ENCODE measurements at regions of chr19 and their contacts with region 1.

Region 1: GRCh38 chr19:34733826-34734600 is at the start of gene ZNF181:
- DNase-seq: peak; percentile 94
- H3K4me3 Mint-ChIP-seq: peak within 1 kb of the TSS; percentile 93
- H3K27ac Mint-ChIP-seq: peak within 1 kb of the TSS; percentile 96
- H3K4me1 Mint-ChIP-seq: peaks cover 23% of the 10 kb centered on the region
- H3K27me3 Mint-ChIP-seq: no peaks in the 10 kb centered on the region
- total RNA-seq, gene ZNF181: 3.9 and 4.4 TPM in 2 replicates

Region 2: DNA sequence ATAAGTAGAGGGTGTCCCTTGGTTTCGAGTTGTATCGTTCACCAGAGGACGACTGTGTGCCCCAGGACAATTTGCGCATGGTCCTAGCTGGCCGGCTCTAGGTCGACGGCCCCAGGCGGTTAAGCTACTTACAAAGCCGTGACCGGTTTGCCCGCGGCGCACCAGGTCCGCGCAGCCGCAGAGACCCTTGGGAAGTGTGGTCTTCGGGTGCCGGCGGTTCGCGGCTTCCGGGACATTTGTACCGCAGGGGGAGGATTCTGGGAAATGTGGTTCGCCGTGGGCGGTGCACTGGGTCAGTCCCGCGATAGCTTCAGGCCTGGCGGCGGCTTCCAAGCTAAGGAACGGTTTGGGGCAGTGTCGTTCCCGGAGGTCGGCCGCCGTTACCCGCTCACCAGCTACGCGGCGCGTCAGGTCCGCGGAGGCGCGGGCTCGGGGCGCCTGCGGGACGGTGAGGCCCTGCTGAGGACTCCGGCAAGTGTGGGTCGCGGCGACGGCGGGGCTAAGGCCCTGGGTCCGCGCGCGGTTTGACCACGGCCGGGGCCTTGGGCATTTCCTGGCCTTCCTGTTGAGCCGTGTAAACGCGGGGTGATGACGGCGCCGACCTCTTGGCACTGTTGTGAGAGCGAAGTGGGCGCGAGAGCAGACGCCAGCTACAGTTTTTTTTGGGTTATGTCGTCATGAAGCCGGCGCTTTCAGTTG is 56.5 kb before region 1 on chr19 and contains the start of gene ZNF302:
- intact Hi-C with region 1: loop called (anchors 1 kb)
- DNase-seq: peak; percentile 98
- H3K4me3 Mint-ChIP-seq: peak within 1 kb of the TSS; percentile 96
- H3K27ac Mint-ChIP-seq: peak within 1 kb of the TSS; percentile 100
- H3K4me1 Mint-ChIP-seq: peaks cover 28% of the 10 kb centered on the region
- H3K27me3 Mint-ChIP-seq: peaks cover 2% of the 10 kb centered on the region
- total RNA-seq, gene ZNF302: 14.4 and 15.2 TPM in 2 replicates

Region 3: DNA sequence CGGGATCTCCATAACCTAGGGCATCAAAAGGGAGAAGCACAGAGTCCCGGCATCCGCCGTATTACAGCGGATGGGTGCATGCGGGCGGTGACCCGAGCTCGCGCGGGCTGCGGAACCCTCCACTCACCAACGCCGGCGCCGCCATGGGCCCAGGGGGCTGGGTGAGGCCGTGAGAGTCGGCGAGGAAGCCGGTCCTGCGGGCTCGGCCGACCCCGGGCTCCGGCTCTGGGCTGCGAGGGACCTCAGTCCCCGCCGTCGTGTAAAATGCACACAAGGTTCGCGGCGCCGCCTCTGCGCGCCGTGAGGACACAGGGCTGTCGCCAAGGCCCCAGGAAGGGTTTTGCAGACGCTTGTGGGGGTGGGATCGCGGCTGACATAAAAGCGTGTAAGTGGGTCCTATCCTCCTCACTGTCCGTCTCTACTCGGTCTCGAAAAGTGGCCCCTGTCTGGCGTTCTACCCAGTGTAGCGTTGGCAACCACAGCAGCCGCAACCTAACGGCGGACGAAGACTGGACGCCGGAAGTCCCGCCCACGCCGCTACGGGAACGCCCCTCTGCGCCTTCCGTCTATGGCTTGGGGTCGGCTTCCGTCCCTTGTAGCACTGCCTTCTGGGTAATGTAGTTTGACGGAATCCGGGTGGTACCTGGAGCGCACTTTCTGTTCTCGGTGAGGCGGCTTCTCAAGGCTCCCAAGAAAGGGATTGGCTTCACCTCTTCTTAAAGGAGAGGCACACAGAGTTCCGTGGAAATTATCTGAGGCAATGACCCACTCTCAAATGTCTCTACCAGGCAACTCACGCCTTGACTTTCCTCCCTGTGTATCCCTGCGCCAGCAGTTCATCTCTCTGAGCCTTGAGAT is 38.9 kb after region 1 on chr19 and contains the start of gene ZNF599:
- intact Hi-C with region 1: loop called (anchors 1 kb)
- DNase-seq: peak; percentile 97
- H3K4me3 Mint-ChIP-seq: peak within 1 kb of the TSS; percentile 92
- H3K27ac Mint-ChIP-seq: peak within 1 kb of the TSS; percentile 90
- H3K4me1 Mint-ChIP-seq: peaks cover 16% of the 10 kb centered on the region
- H3K27me3 Mint-ChIP-seq: peaks cover 2% of the 10 kb centered on the region
- total RNA-seq, gene ZNF599: 2.2 and 2.4 TPM in 2 replicates

Measured in activated CD4-positive, alpha-beta T cell treated with anti-CD3 and anti-CD28 coated beads, Interleukin-2, amount 10 ng/mL, durations not matched to agents 24 days and 14 days (primary cell).